ENCODE measurements at regions of chr19 and their contacts with region 1.

Region 1: DNA sequence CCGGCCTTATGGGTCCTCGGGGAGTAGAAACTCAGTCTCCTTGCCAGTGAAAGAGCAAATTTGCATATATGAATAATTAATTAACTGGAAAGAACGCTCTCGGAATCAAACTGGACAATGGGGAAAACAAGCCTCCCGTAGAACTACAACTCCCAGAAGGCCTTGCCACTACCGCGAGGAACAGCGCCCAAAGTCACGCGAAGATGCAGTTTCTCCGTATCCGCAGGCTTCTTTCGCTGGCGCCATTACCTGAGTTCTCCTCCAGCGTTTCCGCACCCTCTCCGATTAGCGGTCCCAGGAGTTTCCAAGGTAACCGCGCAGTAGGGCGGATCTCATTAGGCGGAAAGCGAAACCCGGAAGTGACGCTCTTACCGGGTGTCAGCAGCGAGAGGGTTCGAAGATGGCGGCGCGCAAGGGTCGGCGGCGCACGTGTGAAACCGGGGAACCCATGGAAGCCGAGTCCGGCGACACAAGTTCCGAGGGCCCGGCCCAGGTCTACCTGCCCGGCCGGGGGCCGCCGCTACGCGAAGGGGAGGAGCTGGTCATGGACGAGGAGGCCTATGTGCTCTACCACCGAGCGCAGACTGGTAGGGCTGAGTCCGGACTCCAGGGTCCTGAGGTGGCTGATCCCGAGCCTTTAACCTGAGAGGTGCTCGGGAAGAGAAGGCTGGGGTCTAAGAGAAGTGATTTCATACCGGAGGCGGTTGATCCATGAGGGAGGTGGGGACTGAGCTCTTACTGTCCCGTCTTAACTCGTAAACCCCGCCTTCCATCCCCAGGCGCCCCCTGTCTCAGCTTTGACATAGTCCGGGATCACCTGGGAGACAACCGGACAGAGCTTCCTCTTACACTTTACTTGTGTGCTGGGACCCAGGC is at the start of gene GRWD1:
- DNase-seq: peak; percentile 98
- H3K4me3 ChIP-seq: peak within 1 kb of the TSS; percentile 69 to 92 (median 80)
- H3K27ac ChIP-seq: peak within 1 kb of the TSS; percentile 88
- H3K4me1 ChIP-seq: peaks cover 22% of the 10 kb centered on the region
- H3K27me3 ChIP-seq: peaks cover 19% of the 10 kb centered on the region
- CTCF ChIP-seq: peak in 1 of 2 donors; percentile 18
- total RNA-seq, gene GRWD1: 35.3 to 45.9 TPM

Region 2: GRCh38 chr19:48321622-48322591 is 123.9 kb before region 1 on chr19:
- CTCF ChIA-PET with region 1: no interaction called
- dilution Hi-C with region 1: no loop called
- in situ Hi-C with region 1: no loop called
- intact Hi-C with region 1: loop called (anchors 1 kb)
- DNase-seq: peak; percentile 99
- H3K4me3 ChIP-seq: peak overlapping the region; percentile 57 to 76 (median 63)
- H3K27ac ChIP-seq: peak overlapping the region; percentile 96
- H3K4me1 ChIP-seq: peaks cover 30% of the 10 kb centered on the region
- H3K27me3 ChIP-seq: no peaks in the 10 kb centered on the region
- CTCF ChIP-seq: peak in 1 of 2 donors; percentile 29

Region 3: DNA sequence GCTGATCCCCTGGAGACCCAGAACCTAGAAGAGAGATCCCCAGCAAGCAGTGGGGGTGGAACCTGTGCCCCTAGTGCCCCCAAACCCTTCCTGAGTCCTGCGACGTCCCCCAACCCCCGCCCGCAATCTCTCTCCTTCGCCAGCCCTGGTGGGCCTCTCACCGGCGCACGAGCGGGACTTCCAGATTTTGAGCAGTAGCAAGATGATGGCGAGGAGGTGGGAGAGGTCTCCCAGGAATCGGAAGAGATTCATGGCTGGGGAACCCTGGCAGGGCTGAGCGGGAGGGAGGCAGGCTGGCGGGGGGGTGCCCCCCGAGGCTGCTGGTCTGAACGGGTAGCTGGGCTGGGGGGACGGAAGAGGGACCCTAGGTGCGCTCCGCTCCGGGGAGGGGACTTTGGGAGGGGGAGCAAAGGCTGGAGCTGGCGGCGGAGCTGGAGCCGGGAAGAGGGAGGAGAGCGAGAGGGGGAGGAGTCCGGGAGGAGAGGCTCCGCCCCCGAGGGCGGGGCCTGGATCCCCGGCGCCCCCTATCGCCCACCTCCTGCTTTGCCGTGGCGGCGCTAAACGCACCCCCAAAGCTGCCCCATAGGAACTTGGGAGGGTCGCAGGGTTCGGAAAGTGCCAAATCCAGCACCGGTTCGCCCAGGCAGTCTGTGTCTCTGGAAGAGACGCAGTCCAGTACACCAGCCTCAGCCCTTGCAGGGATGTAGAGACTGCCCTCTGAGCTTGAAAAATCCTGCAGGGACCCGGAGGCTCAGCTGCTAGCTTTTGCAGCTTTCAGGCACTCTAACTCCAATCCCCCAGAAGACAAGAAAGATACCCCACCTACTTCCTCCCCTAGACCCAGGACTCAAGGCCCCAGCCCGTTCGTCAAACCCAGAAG is 54.5 kb before region 1 on chr19 and contains the start of gene KDELR1:
- CTCF ChIA-PET with region 1: interaction called, 3 read pairs
- dilution Hi-C with region 1: no loop called
- in situ Hi-C with region 1: no loop called
- intact Hi-C with region 1: loop called (anchors 1 kb)
- DNase-seq: peak; percentile 58
- H3K4me3 ChIP-seq: peak within 1 kb of the TSS; percentile 63 to 94 (median 93)
- H3K27ac ChIP-seq: peak within 1 kb of the TSS; percentile 87
- H3K4me1 ChIP-seq: peaks cover 12% of the 10 kb centered on the region
- H3K27me3 ChIP-seq: peaks cover 10% of the 10 kb centered on the region
- CTCF ChIP-seq: peak; percentile 70 to 95
- total RNA-seq, gene KDELR1: 73.2 to 171 TPM

Region 4: DNA sequence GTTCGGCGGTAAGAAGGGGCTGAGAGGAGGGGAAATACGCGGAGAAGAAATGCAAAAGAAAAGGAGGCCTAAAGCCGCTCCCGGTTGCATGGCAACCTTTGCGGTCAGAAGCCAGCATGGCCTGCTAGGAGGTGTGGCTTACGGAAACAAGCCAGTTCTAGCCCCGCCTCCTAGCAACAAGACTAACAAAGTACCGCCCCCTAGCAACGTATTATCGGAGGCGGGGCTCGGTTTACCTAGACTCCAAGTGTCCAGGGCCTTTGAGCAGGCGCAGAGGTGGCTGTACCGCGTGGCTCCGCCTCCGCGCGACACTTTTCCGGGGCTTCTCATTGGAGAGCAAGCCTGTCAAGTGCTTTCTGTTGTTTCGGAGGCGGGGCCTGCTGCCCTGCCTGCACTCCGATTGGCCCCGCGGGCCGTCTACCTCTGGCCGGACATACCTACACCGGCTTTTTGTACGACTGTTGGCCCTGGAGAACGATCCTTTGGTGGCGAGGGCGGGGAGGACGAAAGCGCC is 23.0 kb after region 1 on chr19:
- CTCF ChIA-PET with region 1: no interaction called
- dilution Hi-C with region 1: no loop called
- in situ Hi-C with region 1: no loop called
- intact Hi-C with region 1: loop called (anchors 1 kb)
- DNase-seq: peak; percentile 100
- H3K4me3 ChIP-seq: peak overlapping the region; percentile 79 to 94 (median 86)
- H3K27ac ChIP-seq: peak overlapping the region; percentile 87
- H3K4me1 ChIP-seq: peaks cover 39% of the 10 kb centered on the region
- H3K27me3 ChIP-seq: no peaks in the 10 kb centered on the region
- CTCF ChIP-seq: no peak

Region 5: GRCh38 chr19:48513289-48514122 is 67.7 kb after region 1 on chr19:
- CTCF ChIA-PET with region 1: no interaction called
- dilution Hi-C with region 1: loop called (anchors 5 kb)
- in situ Hi-C with region 1: no loop called
- intact Hi-C with region 1: no loop called
- DNase-seq: peak; percentile 62
- H3K4me3 ChIP-seq: peak overlapping the region; percentile 57 to 70 (median 64)
- H3K27ac ChIP-seq: no peak overlapping the region
- H3K4me1 ChIP-seq: peaks cover 5% of the 10 kb centered on the region
- H3K27me3 ChIP-seq: no peaks in the 10 kb centered on the region
- CTCF ChIP-seq: no peak